Dorsolateral prefrontal cortex (tissue), 120 donors: ENCODE measurements at regions of chr6 and their contacts with region 1.

Region 1: GRCh38 chr6:27518881-27519795 is 46.2 kb upstream of the ZNF184 start:
- DNase-seq: peak in 8 of 10 donors; percentile 43 to 69 (median 58)
- H3K4me3 ChIP-seq: peak overlapping the region; percentile 61 to 97 (median 83)
- H3K27ac ChIP-seq: peak overlapping the region; percentile 52 to 97 (median 90)
- H3K27me3 ChIP-seq: peaks cover 0 to 23% (median 9%) of the 10 kb centered on the region in 45 donors
- CTCF ChIP-seq: peak; percentile 51 to 78 (median 70)

Region 2: DNA sequence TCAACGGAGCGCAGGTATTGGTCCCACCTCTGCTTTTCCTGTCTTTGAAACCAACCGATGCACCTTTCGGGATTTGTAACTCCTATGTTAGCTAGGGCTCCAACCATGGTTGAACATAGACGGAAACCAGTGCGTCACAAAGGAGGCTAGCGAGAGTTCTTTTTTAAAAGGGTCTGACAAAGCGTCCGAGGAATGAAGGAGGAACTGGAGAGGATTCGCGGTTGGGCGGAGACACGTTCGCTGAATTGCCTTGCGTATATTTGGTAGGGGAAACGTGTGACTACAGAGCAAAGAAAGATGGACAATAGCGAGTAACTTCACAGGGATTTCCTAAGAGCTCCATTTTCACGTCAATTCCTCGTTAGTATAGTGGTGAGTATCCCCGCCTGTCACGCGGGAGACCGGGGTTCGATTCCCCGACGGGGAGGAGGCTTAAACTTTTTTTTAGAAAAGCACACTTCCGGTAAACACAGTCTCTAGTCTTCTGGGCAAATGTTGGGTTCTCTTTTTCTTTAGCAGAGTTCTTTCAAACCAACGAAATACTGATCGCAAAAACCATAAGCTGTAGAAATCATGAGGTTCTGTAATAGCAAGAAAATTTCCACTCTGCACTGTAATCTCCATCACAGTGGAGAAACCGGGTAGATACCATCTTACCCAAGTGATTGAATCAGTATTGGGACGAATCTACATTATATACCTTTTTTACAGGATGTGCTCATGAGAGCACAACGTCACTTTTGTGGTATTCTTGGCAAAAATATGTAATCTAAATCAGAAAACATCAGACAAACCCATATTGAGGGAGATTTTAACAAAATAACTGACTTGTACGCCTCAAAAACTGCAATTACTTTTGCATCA is 39.6 kb before region 1 on chr6:
- intact Hi-C with region 1: loop called in 1 of 2 experiments (anchors 2 kb)
- DNase-seq: peak; percentile 55 to 79 (median 68)
- H3K4me3 ChIP-seq: peak overlapping the region; percentile 57 to 93 (median 81)
- H3K27ac ChIP-seq: peak overlapping the region; percentile 63 to 99 (median 95)
- H3K27me3 ChIP-seq: no peaks in the 10 kb centered on the region
- CTCF ChIP-seq: peak in 12 of 56 donors; percentile 6 to 33 (median 12)

Region 3: GRCh38 chr6:27795697-27796494 is 276.8 kb after region 1 on chr6:
- intact Hi-C with region 1: loop called in 1 of 2 experiments (anchors 5 kb)
- DNase-seq: peak in 1 of 10 donors; percentile 40
- H3K4me3 ChIP-seq: peak overlapping the region in 1 of 59 donors; percentile 8
- H3K27ac ChIP-seq: no peak overlapping the region
- H3K27me3 ChIP-seq: peaks cover 0 to 15% (median 0%) of the 10 kb centered on the region in 45 donors
- CTCF ChIP-seq: peak; percentile 63 to 90 (median 82)